Mammary epithelial cell (primary cell): ENCODE measurements at regions of chr10 and their contacts with region 1.

Region 1: GRCh38 chr10:77084431-77085144 is 553.0 kb downstream of the KCNMA1 start:
- DNase-seq: no peak
- H3K4me3 ChIP-seq: no peak overlapping the region
- H3K27ac ChIP-seq: no peak overlapping the region
- H3K4me1 ChIP-seq: peaks cover 4% of the 10 kb centered on the region
- H3K27me3 ChIP-seq: no peaks in the 10 kb centered on the region
- CTCF ChIP-seq: no peak

Region 2: GRCh38 chr10:76911184-76911583 is 173.4 kb before region 1 on chr10:
- CTCF ChIA-PET with region 1: no interaction called
- dilution Hi-C with region 1: no loop called
- in situ Hi-C with region 1: no loop called
- intact Hi-C with region 1: no loop called
- DNase-seq: no peak
- H3K4me3 ChIP-seq: no peak overlapping the region
- H3K27ac ChIP-seq: no peak overlapping the region
- H3K4me1 ChIP-seq: no peaks in the 10 kb centered on the region
- H3K27me3 ChIP-seq: no peaks in the 10 kb centered on the region
- CTCF ChIP-seq: no peak

Region 3: GRCh38 chr10:77036993-77037734 is 47.4 kb before region 1 on chr10:
- CTCF ChIA-PET with region 1: no interaction called
- dilution Hi-C with region 1: no loop called
- in situ Hi-C with region 1: no loop called
- intact Hi-C with region 1: loop called (anchors 5 kb)
- DNase-seq: no peak
- H3K4me3 ChIP-seq: no peak overlapping the region
- H3K27ac ChIP-seq: no peak overlapping the region
- H3K4me1 ChIP-seq: peaks cover 10% of the 10 kb centered on the region
- H3K27me3 ChIP-seq: no peaks in the 10 kb centered on the region
- CTCF ChIP-seq: peak; percentile 49 to 55

Region 4: DNA sequence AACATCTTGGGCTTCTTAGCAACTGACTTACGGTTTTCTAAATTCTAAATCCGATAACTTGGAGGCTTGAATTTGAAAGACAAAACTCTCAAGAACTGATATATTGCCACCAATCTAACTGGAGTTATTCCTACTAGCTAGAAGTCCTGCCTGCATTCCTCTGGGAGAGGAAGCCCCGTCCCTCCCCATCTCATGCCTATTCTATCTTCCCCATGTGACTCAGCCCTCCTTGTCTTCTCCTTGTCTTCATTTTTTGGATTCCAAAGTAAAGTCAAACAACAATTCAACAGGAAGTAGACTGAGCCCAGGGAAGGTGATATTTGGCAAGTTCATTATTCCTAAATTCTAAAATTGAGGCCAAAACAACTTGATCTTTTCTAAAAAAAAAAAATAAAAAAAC is 34.7 kb before region 1 on chr10:
- CTCF ChIA-PET with region 1: no interaction called
- dilution Hi-C with region 1: no loop called
- in situ Hi-C with region 1: no loop called
- intact Hi-C with region 1: loop called (anchors 5 kb)
- DNase-seq: no peak
- H3K4me3 ChIP-seq: no peak overlapping the region
- H3K27ac ChIP-seq: no peak overlapping the region
- H3K4me1 ChIP-seq: peaks cover 3% of the 10 kb centered on the region
- H3K27me3 ChIP-seq: no peaks in the 10 kb centered on the region
- CTCF ChIP-seq: no peak

Region 5: DNA sequence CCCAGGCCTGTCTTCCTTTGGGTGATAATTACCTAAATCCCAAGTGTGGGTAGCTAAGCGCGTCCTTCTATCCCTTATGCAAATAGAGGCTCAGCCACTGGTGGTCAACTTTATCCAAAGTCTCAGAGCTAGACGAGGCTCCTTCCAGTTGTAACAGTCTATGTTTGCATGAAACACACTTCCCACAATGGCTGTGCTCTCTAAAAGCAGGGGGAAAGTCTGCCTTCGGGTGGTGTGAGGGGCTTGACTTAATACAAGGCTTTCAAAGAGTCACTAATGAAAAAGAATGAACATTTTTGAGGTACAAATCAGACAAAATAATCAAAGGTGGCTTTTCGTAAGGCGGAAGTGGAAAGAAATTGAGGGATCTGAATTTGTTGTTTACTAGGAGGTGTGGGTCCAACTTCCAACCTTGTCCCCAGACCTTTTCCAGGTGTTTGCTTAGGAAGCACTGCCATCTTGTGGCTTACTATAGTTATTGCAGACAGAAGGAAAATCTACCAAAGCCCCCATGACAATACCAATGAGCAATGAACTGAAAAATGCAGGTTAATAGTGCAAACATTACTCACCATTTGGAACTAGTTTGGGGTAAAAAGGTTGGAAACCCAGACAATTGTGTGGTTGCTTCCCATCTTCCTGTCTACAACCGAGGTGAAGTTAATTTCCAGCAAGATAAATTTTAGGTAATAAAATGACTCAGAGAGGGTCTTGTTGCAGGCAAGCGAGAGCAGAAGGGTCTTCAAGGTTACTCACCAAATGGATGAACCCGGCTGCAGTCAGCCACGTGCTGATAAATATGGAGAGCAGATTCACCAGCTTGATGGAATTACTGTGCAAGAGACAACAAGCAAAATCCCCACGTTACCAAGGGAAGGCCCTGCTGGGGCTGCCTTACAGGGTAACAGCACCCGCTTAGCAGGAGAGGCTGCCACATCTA is 27.3 kb after region 1 on chr10:
- CTCF ChIA-PET with region 1: no interaction called
- dilution Hi-C with region 1: no loop called
- in situ Hi-C with region 1: no loop called
- intact Hi-C with region 1: no loop called
- DNase-seq: peak; percentile 66
- H3K4me3 ChIP-seq: no peak overlapping the region
- H3K27ac ChIP-seq: no peak overlapping the region
- H3K4me1 ChIP-seq: peaks cover 9% of the 10 kb centered on the region
- H3K27me3 ChIP-seq: no peaks in the 10 kb centered on the region
- CTCF ChIP-seq: peak; percentile 76 to 77

Region 6: DNA sequence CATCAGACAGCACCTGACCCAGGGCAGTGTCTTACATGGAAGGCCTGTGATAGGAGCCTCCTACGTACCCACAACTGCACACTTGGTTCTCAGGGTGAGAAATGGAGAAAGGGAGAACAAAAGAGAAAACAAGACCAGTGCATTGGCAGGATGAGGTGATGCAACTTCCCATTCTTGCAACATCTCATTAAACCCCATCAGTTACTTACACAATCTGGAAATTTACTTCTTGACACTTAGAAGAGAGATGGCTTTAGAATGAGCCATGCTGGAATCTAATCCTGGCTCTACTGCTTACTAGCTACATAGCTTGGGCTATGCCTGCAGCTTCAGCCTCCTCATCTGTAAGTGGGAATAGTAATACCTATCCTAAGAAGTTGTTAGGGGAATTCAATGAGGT is 161.4 kb after region 1 on chr10:
- CTCF ChIA-PET with region 1: no interaction called
- dilution Hi-C with region 1: no loop called
- in situ Hi-C with region 1: no loop called
- intact Hi-C with region 1: no loop called
- DNase-seq: peak; percentile 14
- H3K4me3 ChIP-seq: no peak overlapping the region
- H3K27ac ChIP-seq: no peak overlapping the region
- H3K4me1 ChIP-seq: peaks cover 32% of the 10 kb centered on the region
- H3K27me3 ChIP-seq: no peaks in the 10 kb centered on the region
- CTCF ChIP-seq: no peak